ENCODE measurements at regions of chr7 and their contacts with region 1.

Region 1: GRCh38 chr7:116180302-116180701 is 30.0 kb upstream of the TES start:
- H3K4me3 ChIP-seq: no peak overlapping the region
- H3K27ac ChIP-seq: no peak overlapping the region
- H3K4me1 ChIP-seq: no peaks in the 10 kb centered on the region
- CTCF ChIP-seq: peak; percentile 38; the same call in 1 of the 2 replicates

Region 2: DNA sequence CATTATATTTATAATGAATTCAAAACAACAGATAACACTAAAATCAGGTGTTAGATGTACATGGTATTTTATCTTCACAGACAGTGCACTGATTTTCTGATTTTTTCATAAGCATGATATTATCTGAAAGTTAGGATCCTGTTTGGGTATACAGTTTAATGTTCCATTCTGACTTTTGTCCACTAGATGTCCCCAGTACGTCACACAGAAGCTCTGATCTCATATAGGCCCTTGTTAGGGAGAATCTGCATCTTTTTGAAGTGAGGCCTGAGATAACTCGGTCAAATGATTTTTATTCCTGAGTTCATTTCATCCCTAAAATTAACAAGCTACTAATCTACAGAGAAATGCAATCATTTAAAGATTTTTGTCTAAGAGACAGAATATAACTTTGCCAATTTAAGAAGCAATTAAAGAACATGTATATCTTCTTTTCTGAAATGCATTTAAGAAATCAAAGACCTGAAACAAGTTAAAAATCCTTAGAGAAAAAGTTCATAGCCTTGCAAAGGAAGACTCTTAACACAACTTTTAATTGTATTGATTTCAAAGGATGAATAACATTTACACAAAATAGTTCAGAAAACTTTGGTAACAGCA is 42.0 kb before region 1 on chr7:
- CTCF ChIA-PET with region 1: interaction called, 10 read pairs
- POLR2A ChIA-PET with region 1: no interaction called
- H3K4me3 ChIP-seq: no peak overlapping the region
- H3K27ac ChIP-seq: no peak overlapping the region
- H3K4me1 ChIP-seq: no peaks in the 10 kb centered on the region; the same call in none of the 2 replicates
- CTCF ChIP-seq: peak; percentile 54; the same call in 1 of the 2 replicates

Region 3: GRCh38 chr7:116197360-116197759 is 17.1 kb after region 1 on chr7:
- CTCF ChIA-PET with region 1: interaction called, 12 read pairs
- POLR2A ChIA-PET with region 1: no interaction called
- H3K4me3 ChIP-seq: no peak overlapping the region
- H3K27ac ChIP-seq: no peak overlapping the region
- H3K4me1 ChIP-seq: peaks cover 11% of the 10 kb centered on the region
- CTCF ChIP-seq: no peak

Region 4: DNA sequence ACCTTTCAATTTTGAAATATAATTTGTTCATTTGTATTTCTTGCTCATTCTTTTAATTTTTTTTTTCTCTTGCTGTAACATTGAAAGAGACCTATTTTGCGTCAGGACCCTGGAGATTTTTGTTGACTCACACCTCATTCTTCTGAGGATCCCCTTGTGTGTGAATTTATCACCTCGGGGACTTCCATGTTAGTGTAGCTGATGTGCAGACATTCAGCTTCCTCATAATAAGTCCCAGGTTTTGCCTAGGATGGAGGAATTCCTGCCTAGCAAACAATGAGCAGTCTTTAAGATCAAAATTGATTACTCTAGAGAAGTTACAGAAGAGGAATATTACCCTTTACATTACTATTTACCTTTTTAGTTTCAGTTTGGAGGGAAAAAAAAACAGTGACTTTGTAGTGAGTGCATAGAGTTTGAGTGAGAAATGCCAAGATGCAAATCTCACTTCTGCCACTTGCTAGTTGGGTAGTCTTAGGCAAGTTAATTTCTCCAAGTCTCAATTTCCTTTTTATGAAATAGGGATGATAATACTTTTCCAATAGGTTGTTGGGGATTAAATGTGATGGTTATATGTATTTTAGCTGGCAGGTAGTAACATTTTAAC is 44.3 kb after region 1 on chr7:
- CTCF ChIA-PET with region 1: interaction called, 12 read pairs
- POLR2A ChIA-PET with region 1: no interaction called
- H3K4me3 ChIP-seq: no peak overlapping the region
- H3K27ac ChIP-seq: no peak overlapping the region
- H3K4me1 ChIP-seq: peaks cover 60% of the 10 kb centered on the region
- CTCF ChIP-seq: no peak